ENCODE measurements at regions of chr20 and their contacts with region 1.

Region 1: DNA sequence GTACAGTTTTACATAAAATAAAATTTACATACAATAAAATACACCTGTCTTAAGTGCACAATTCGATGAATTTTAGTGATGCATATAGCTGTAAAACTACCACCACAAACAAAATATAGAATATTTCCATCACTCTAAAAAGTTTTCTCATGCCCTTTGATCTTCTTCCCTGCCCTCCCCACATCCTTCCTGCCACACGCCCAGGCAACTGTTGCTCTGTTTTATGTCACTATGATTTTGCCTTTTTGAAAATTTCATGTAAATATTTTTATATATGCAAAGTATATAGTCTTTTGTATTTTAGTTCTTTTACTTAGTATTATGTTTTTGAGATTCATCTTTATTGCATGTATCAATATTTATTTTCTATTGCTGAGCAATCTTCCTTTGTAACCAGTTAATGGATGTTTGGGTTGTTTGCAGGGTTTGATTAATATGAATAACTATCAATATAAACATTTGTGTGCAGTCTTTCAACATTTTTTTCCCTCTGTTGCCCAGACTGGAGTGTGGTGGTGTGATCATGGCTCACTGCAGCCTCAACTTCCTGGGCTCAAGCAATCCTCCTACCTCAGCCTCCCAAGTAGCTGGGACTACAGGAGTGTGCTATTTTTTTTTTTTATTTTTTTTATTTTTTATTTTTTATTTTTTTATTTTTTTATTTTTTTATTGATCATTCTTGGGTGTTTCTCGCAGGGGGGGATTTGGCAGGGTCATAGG is 23.8 kb upstream of the SAMHD1 start:
- DNase-seq: peak in 8 of 9 donors; percentile 49 to 92 (median 88)
- ATAC-seq: peak; percentile 96
- H3K4me3 ChIP-seq: peak overlapping the region; percentile 8
- H3K4me3 Mint-ChIP-seq: peak overlapping the region; percentile 35 to 87 (median 70)
- H3K27ac ChIP-seq: peak overlapping the region; percentile 69
- H3K27ac Mint-ChIP-seq: peak overlapping the region; percentile 72 to 99 (median 91)
- H3K4me1 ChIP-seq: peaks cover 29 to 40% of the 10 kb centered on the region in 2 donors
- H3K4me1 Mint-ChIP-seq: peaks cover 16 to 53% (median 41%) of the 10 kb centered on the region in 7 donors
- H3K27me3 ChIP-seq: no peaks in the 10 kb centered on the region
- H3K27me3 Mint-ChIP-seq: no peaks in the 10 kb centered on the region

Region 2: GRCh38 chr20:36932476-36933426 is 42.5 kb before region 1 on chr20:
- CTCF ChIA-PET with region 1: no interaction called
- POLR2A ChIA-PET with region 1: interaction called, 17 read pairs
- intact Hi-C with region 1: loop called in 1 of 2 experiments (anchors 1 kb)
- DNase-seq: no peak
- ATAC-seq: no peak
- H3K4me3 ChIP-seq: no peak overlapping the region
- H3K4me3 Mint-ChIP-seq: peak overlapping the region in 8 of 10 donors; percentile 7 to 87 (median 48)
- H3K27ac ChIP-seq: peak overlapping the region; percentile 34
- H3K27ac Mint-ChIP-seq: peak overlapping the region; percentile 71 to 99 (median 96)
- H3K4me1 ChIP-seq: peaks cover 47 to 64% of the 10 kb centered on the region in 2 donors
- H3K4me1 Mint-ChIP-seq: peaks cover 18 to 83% (median 61%) of the 10 kb centered on the region in 7 donors
- H3K27me3 ChIP-seq: no peaks in the 10 kb centered on the region
- H3K27me3 Mint-ChIP-seq: no peaks in the 10 kb centered on the region

Region 3: DNA sequence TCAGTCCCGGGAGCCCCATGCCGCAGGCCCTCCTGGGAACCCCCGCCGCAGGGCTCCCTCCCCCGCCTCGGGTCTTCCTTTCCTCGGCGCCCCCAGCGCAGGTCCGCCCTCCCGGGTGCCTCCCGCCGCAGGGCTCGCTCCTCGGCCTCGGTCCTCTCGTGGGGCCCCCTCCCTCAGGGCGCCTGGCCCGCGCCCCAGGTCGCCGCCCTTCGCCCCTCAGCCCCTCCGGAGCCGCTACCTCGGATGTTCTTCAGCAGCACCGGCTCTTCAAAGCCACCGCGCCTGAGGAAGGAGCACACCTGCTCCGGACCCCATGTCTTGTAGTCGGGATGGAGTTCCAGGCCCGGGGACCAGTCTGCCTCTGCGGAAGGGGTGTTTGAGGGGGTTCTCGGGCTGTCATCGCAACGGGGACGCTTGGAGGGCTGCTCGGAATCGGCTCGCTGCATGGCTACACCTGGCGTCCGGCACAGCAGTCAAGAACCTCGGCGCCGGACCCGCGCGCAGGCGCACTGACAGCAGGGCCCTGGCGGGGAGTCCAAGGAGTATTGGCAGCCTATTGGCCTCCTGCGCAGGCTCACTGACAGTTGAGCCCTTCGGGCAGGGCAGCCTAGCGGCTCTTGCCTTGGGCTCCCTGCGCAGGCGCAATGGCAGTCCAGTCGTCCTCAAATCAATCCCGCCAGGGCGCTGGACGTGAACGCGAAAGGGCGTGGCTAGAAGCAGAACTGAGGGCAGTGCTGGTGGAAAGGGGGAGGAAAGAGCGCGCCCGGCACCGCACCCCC is 23.9 kb before region 1 on chr20 and contains the start of gene SAMHD1:
- CTCF ChIA-PET with region 1: interaction called, 11 read pairs
- POLR2A ChIA-PET with region 1: interaction called, 57 read pairs
- intact Hi-C with region 1: loop called (anchors 1 to 2 kb)
- DNase-seq: peak; percentile 72 to 93 (median 81)
- ATAC-seq: peak; percentile 86
- H3K4me3 ChIP-seq: peak within 1 kb of the TSS; percentile 94
- H3K4me3 Mint-ChIP-seq: peak within 1 kb of the TSS; percentile 93 to 99 (median 98)
- H3K27ac ChIP-seq: peak within 1 kb of the TSS; percentile 97
- H3K27ac Mint-ChIP-seq: peak within 1 kb of the TSS; percentile 96 to 99 (median 98)
- H3K4me1 ChIP-seq: peaks cover 40 to 45% of the 10 kb centered on the region in 2 donors
- H3K4me1 Mint-ChIP-seq: peaks cover 28 to 50% (median 37%) of the 10 kb centered on the region in 7 donors
- H3K27me3 ChIP-seq: no peaks in the 10 kb centered on the region
- H3K27me3 Mint-ChIP-seq: no peaks in the 10 kb centered on the region
- total RNA-seq, gene SAMHD1: 271 to 393 (median 338) TPM

Region 4: DNA sequence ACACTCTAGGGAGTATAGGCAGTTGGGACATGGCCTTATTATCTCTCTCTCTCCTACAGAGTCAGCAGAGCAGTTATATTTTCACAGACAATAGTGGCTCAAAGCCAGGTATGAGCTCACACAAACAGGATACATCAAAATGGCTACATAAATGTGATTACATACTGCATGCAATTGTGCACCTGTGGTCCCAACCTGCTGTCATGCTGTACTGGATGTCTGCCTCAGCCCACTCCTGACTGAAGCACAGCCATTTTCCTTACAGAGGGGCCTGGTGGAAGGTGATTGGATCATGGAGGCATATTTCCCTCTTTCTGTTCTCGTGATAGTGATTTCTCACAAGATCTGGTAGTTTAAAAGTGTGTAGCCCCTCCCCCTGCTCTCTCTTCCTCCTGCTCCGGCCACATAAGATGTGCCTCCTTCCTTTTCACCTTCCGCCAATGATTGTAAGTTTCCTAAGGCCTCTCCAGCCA is 13.3 kb after region 1 on chr20:
- CTCF ChIA-PET with region 1: no interaction called
- POLR2A ChIA-PET with region 1: interaction called, 56 read pairs
- intact Hi-C with region 1: loop called in 1 of 2 experiments (anchors 2 kb)
- DNase-seq: peak in 7 of 9 donors; percentile 57 to 77 (median 66)
- ATAC-seq: peak; percentile 76
- H3K4me3 ChIP-seq: no peak overlapping the region
- H3K4me3 Mint-ChIP-seq: peak overlapping the region in 9 of 10 donors; percentile 18 to 85 (median 62)
- H3K27ac ChIP-seq: peak overlapping the region; percentile 72
- H3K27ac Mint-ChIP-seq: peak overlapping the region; percentile 62 to 99 (median 97)
- H3K4me1 ChIP-seq: peaks cover 9 to 32% of the 10 kb centered on the region in 2 donors
- H3K4me1 Mint-ChIP-seq: peaks cover 27 to 66% (median 53%) of the 10 kb centered on the region in 7 donors
- H3K27me3 ChIP-seq: no peaks in the 10 kb centered on the region
- H3K27me3 Mint-ChIP-seq: no peaks in the 10 kb centered on the region